CD8-positive, alpha-beta memory T cell (primary cell): ENCODE measurements at regions of chr12 and their contacts with region 1.

Region 1: GRCh38 chr12:6443361-6443983 is 1.3 kb upstream of the CD27 start:
- DNase-seq: no peak
- H3K4me3 ChIP-seq: peak overlapping the region; percentile 41
- H3K4me3 Mint-ChIP-seq: peak overlapping the region; percentile 71 to 99 (median 97)
- H3K27ac ChIP-seq: no peak overlapping the region
- H3K27ac Mint-ChIP-seq: peak overlapping the region; percentile 78 to 99 (median 94)
- H3K4me1 ChIP-seq: peaks cover 32% of the 10 kb centered on the region
- H3K4me1 Mint-ChIP-seq: peaks cover 56 to 71% (median 68%) of the 10 kb centered on the region in 3 donors
- H3K27me3 ChIP-seq: no peaks in the 10 kb centered on the region
- H3K27me3 Mint-ChIP-seq: no peaks in the 10 kb centered on the region

Region 2: DNA sequence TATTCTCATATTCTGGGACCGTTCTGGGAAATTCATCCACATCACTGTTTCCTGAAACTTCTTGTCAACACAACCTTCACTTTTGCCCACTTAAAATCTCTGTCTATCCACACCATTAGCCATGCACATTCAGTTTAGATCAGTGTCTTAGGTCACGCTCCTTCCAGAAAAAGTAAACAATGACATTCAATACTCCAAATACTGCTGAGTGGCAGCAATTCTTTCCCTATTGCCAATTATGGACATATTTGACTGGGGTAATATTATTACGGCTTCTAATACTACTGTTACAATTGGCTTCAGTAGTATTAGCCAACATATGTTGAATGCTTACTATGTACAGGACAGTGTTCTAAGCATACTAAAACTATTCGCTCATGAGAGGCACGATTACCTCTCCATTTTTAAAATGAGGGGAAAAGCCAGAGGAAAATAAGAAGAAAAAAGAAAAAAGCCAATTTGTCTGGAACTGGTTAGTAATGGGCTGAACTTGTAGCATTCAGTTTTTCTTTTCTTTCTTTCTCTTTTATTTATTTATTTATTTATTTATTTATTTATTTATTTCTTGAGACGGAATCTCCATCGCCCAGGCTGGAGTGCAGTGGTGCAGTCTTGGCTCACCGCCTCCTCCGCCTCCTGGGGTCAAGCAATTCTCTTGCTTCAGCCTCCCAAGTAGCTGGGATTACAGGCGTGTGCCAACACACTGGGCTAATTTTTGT is 36.1 kb before region 1 on chr12:
- CTCF ChIA-PET with region 1: no interaction called
- POLR2A ChIA-PET with region 1: no interaction called
- DNase-seq: no peak
- H3K4me3 ChIP-seq: no peak overlapping the region
- H3K4me3 Mint-ChIP-seq: no peak overlapping the region
- H3K27ac ChIP-seq: no peak overlapping the region
- H3K27ac Mint-ChIP-seq: no peak overlapping the region
- H3K4me1 ChIP-seq: no peaks in the 10 kb centered on the region
- H3K4me1 Mint-ChIP-seq: no peaks in the 10 kb centered on the region
- H3K27me3 ChIP-seq: no peaks in the 10 kb centered on the region
- H3K27me3 Mint-ChIP-seq: peaks cover 4 to 7% of the 10 kb centered on the region in 2 donors

Region 3: DNA sequence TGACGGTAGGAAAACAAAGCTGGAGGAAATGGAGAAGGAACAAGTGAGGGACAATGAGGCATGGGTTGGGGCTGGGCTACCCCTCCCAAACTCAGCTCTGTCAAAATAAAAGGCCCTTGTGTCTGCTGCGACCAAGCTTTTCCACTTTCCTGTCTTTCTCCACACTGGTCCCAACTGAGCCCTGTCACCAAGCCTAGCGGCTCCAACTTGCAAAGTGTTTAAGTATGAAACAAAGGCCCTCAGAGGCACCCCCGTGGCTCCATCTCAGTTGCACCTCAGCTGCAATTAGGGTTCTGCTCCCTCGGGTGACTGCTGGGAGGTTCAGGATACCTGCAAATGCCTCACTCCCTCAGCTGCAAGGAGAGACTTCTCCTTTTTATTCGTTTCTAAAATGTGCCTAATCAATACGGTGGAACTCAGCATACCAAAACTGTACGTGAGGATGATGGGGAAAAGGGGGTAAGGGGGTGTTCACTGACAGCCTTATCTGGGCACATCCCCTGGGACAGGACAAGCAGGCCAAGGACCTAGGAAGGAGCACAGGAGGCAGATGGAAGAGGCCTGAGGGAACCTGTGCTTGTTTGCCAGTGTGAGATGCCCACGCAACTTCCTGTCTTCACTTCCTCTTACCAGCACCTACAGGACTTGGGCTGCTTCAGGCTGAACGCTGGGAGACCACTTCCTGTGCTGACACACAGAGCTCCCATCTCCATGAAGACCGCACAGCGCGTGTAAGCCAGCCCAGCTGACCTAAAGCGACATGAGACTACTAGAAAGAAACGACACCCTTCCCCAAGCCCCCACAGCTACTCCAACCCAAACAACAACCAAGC is 18.1 kb after region 1 on chr12:
- CTCF ChIA-PET with region 1: interaction called, 179 read pairs
- POLR2A ChIA-PET with region 1: interaction called, 109 read pairs
- DNase-seq: peak; percentile 74 to 93 (median 87)
- H3K4me3 ChIP-seq: peak overlapping the region; percentile 46
- H3K4me3 Mint-ChIP-seq: peak overlapping the region; percentile 71 to 89 (median 83)
- H3K27ac ChIP-seq: peak overlapping the region; percentile 79
- H3K27ac Mint-ChIP-seq: peak overlapping the region; percentile 94 to 99 (median 99)
- H3K4me1 ChIP-seq: peaks cover 88% of the 10 kb centered on the region
- H3K4me1 Mint-ChIP-seq: peaks cover 75 to 89% (median 83%) of the 10 kb centered on the region in 3 donors
- H3K27me3 ChIP-seq: no peaks in the 10 kb centered on the region
- H3K27me3 Mint-ChIP-seq: peaks cover 0 to 2% of the 10 kb centered on the region in 2 donors